ENCODE measurements at regions of chr10 and their contacts with region 1.

Region 1: GRCh38 chr10:112711366-112711765 is 238.7 kb upstream of the TCF7L2 start:
- DNase-seq: no peak

Region 2: DNA sequence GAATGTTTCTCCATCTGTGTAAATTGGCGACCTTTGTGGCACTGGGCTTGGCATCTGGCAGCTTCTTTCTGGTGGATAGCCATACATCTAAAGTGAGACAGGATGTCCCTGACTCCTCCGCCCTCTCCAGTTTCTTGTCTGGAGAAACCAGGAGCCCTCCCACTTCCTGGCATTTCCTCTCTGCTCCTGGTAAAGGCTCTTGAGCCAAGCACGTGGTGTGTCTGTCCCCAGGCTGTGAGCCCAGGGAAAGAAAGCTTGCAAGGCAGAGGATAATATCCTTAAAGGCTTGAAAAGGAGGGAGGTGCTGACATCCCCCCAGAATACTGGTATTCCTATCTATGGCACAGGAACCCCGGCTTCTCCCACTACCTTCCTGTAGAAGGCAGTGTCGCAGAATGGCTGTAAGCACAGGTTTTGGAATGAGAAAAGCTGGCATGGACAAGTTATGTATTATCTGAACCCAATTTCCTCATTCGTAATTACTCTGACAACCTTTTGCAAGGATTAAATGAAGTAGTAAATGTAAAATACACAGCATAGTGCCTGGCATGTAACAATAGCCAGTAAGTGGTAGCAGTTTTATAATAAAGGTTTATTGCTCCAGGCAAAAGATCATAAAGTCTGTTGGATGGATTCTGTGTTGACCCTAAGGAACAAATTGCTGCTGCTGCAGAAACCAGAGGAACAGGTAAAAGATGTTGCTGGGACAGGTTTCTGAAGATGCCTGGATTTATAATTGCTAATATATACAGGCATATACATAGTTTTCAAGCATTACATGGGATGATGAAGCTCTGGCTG is 349.2 kb before region 1 on chr10:
- intact Hi-C with region 1: no loop called
- DNase-seq: peak in 13 of 42 donors; percentile 5 to 43 (median 22)

Region 3: DNA sequence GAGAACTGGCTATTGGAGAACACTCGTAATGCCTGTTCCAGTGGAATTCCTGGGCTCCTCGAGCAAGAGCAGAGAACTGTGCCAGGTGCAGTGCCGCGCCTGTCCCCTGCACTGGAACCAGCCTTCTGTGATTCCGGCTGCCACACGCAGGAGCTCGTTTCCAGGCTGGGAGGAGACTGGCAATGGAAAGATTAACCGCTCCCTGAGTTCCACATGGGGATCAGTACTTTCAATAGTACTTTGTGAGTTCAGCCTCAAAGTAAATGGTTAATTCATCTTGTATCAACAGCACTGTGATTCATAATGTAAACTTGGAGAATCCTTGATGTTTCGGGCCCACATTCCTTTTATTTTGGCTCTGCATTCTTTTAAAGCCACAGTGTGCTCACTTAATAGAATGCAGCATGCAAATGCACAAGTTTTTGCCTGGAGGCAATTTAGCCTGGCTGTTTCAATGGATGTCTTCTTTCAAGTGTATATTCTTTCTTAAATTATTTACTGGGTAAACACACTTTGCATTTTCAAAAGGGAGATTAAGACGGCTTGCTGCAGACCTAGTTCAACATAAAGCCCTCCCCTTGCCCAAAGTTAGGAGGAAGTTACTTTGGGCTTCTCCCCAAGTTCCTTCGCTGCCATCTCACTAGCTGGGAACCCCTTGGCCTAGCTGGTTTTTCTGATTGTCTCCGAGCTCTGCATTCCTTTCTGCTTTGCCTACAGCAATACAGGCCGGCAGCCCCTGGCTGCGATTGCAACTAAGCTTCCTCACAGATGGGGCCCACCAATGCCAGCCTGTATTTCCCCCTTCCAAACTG is 100.6 kb after region 1 on chr10:
- intact Hi-C with region 1: no loop called
- DNase-seq: peak in 2 of 42 donors; percentile 15 to 17

Region 4: DNA sequence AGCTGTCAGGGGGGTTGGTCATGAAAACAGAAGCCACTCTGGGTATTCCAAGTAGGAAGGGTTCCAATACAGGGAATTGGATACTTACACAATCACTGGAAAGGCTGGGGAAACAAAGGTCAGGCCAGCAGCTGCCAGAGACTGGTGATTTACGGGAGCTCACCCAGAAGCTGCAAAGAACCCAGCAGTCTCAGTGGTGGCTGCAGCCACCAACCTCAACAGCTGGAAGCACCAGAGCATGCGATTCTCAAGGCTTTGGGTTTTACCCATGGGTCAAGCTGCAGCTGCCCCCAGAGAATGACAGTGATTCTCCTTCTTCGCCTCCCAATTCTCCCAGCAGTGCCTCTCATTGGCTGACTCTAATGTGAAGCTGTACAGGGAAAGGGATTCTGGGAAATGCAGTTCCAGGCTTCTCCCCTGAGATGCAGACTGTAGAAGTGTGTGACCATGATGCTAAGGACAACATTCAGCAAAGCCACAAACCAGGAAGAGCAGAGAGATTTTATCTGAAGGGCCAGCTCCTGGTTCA is 131.5 kb after region 1 on chr10:
- intact Hi-C with region 1: no loop called
- DNase-seq: no peak

Region 5: DNA sequence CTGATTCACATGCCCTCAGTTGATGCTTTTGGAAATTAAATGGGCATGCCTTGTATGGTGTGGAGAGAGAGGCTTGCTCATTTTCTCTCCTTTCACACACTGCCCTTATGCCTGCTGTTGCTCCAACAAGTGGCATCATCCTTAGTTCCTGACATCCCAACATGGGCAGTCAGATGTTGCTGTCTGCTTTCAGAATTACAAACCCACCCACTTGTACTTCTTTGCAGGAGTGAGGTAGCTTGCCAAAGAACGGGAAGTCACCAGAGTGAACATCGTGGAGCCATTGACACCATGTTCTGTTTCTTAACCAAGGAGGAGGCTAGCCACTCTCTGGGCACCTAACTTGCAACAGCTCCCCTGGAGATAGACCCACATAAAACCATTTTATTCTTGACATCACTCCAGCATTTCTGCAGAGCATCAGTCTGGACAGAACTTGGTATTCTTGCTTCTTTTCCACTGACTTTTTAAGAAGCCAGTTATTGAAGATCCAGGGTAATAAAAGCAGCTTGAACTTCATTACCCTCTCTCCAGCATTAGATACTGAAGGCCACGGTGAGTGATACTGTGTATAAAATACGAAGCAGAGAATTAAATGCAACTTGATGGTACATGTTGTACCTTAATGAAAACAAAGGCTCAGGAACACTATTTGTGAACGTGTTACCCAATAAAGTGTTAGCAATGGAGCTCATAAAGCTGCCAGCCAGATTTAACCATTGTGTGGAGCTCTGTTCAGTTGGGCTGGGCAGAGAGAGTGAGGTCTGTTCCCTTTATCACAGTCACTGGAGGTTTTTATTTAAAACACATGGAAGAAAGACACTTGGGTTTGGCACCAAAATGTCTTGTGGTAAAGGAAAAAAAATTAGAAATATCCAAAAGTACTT is 645.7 kb after region 1 on chr10:
- intact Hi-C with region 1: loop called (anchors 5 kb)
- DNase-seq: no peak

Measured in head of caudate nucleus (tissue), 42 donors.